Heart right ventricle (tissue), 16 donors: ENCODE measurements at regions of chr22 and their contacts with region 1.

Region 1: DNA sequence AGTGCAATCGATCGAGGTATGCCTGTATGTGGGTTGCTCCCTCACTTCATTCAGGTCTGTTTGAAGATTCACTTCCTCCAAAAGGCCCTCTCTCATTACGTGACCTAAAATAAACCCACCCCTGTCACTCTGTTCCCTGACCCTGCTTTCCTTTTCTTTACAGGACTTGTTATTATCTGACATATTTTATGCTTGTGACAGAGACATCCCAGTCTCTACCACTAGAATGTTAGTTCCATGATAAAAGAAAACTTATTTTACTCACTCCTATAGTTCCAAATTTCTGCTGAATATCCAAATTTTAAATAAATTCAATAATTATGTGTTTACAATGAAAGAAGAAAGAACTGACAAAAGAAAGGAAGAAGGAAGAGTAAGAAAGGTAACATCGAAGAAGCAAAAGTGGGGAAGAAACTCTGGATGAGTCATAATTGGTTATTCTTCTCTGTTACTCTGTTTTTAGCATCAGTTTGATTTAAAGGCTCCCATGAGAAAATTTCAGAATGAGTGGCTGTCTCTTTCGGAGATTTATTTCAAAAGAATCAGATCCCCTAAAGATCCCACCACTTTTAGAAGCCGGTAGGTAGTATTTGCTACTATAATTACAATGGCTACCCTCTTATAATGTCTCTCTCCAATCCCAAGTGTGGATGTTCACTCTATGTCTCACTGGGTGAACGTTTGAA is 33.5 kb downstream of the ENTHD1 start:
- DNase-seq: no peak
- ATAC-seq: no peak
- H3K4me3 ChIP-seq: no peak overlapping the region
- H3K27ac ChIP-seq: no peak overlapping the region
- H3K4me1 ChIP-seq: no peaks in the 10 kb centered on the region
- H3K27me3 ChIP-seq: peaks cover 0 to 62% (median 21%) of the 10 kb centered on the region in 7 donors
- CTCF ChIP-seq: no peak

Region 2: DNA sequence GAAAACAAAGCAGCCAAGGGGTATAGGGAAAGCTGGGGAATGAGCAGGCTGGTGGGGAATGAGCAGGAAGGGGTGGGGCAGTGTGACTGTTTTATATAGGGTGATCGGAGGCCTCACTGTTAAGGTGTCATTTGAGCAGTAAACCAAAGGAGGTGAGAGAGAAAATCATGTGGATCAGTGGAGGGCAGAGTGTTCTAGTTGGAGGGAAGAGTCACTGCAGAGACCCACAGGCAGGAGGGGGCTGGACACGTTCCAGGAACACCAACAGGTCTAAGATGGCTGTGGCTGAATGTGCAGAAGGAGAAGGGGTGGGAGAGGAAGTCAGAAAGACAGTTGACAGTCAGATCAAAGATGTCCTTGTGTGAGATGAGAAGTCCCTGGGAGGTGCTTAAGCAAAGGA is 70.3 kb before region 1 on chr22:
- intact Hi-C with region 1: loop called in 1 of 10 experiments (anchors 10 kb)
- DNase-seq: no peak
- ATAC-seq: no peak
- H3K4me3 ChIP-seq: no peak overlapping the region
- H3K27ac ChIP-seq: no peak overlapping the region
- H3K4me1 ChIP-seq: no peaks in the 10 kb centered on the region
- H3K27me3 ChIP-seq: peaks cover 0 to 12% (median 0%) of the 10 kb centered on the region in 7 donors
- CTCF ChIP-seq: no peak

Region 3: DNA sequence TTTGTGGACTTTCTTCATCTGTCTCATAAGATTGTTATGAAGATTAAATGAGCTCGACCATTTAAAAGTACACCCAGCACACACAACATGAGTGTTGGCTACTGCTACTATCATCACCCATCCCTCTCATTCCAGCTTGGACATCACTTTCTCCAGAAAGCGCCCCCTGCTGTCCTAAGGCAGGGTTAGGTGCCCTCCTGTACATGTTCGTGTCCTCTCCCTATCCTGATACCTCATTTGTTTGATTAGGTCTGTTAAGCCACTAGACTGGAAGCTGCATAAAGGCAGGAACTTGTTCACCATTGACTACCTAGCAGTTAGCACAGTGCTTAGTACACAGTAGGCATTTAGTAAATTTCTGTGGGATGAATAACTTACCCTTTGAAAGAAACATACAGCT is 52.0 kb before region 1 on chr22:
- intact Hi-C with region 1: loop called in 1 of 10 experiments (anchors 10 kb)
- DNase-seq: no peak
- ATAC-seq: no peak
- H3K4me3 ChIP-seq: no peak overlapping the region
- H3K27ac ChIP-seq: no peak overlapping the region
- H3K4me1 ChIP-seq: no peaks in the 10 kb centered on the region
- H3K27me3 ChIP-seq: peaks cover 0 to 79% (median 70%) of the 10 kb centered on the region in 7 donors
- CTCF ChIP-seq: peak in 5 of 9 donors; percentile 14 to 43 (median 27)

Region 4: GRCh38 chr22:40258451-40259046 is 398.5 kb after region 1 on chr22:
- intact Hi-C with region 1: no loop called
- DNase-seq: no peak
- ATAC-seq: peak in 5 of 8 donors; percentile 41 to 80 (median 77)
- H3K4me3 ChIP-seq: no peak overlapping the region
- H3K27ac ChIP-seq: peak overlapping the region in 5 of 10 donors; percentile 9 to 77 (median 31)
- H3K4me1 ChIP-seq: peaks cover 0 to 45% (median 24%) of the 10 kb centered on the region in 9 donors
- H3K27me3 ChIP-seq: no peaks in the 10 kb centered on the region
- CTCF ChIP-seq: no peak